ENCODE measurements at regions of chr3 and their contacts with region 1.

Region 1: GRCh38 chr3:172530566-172530965 is 7.3 kb upstream of the TNFSF10 start:
- DNase-seq: peak; percentile 85
- H3K4me3 Mint-ChIP-seq: peak overlapping the region; percentile 76
- H3K27ac Mint-ChIP-seq: peak overlapping the region; percentile 97
- H3K4me1 Mint-ChIP-seq: peaks cover 49% of the 10 kb centered on the region
- H3K27me3 Mint-ChIP-seq: no peaks in the 10 kb centered on the region

Region 2: GRCh38 chr3:172461530-172462138 is 68.9 kb before region 1 on chr3:
- intact Hi-C with region 1: no loop called
- DNase-seq: no peak
- H3K4me3 Mint-ChIP-seq: no peak overlapping the region
- H3K27ac Mint-ChIP-seq: no peak overlapping the region
- H3K4me1 Mint-ChIP-seq: peaks cover 6% of the 10 kb centered on the region
- H3K27me3 Mint-ChIP-seq: peaks cover 7% of the 10 kb centered on the region

Region 3: GRCh38 chr3:172517859-172518466 is 12.6 kb before region 1 on chr3:
- intact Hi-C with region 1: loop called (anchors 1 kb)
- DNase-seq: peak; percentile 89
- H3K4me3 Mint-ChIP-seq: peak overlapping the region; percentile 87
- H3K27ac Mint-ChIP-seq: peak overlapping the region; percentile 98
- H3K4me1 Mint-ChIP-seq: peaks cover 66% of the 10 kb centered on the region
- H3K27me3 Mint-ChIP-seq: no peaks in the 10 kb centered on the region

Region 4: GRCh38 chr3:172550347-172550943 is 19.9 kb after region 1 on chr3:
- intact Hi-C with region 1: loop called (anchors 1 kb)
- DNase-seq: peak; percentile 87
- H3K4me3 Mint-ChIP-seq: peak overlapping the region; percentile 37
- H3K27ac Mint-ChIP-seq: peak overlapping the region; percentile 82
- H3K4me1 Mint-ChIP-seq: peaks cover 58% of the 10 kb centered on the region
- H3K27me3 Mint-ChIP-seq: no peaks in the 10 kb centered on the region

Measured in activated CD4-positive, alpha-beta T cell treated with anti-CD3 and anti-CD28 coated beads, Interleukin-2, amount 10 ng/mL, durations not matched to agents 24 days and 14 days (primary cell).